ENCODE measurements at regions of chr6 and their contacts with region 1.

Region 1: GRCh38 chr6:108157234-108157980 is 8.4 kb upstream of the NR2E1 start:
- DNase-seq: peak; percentile 23
- ATAC-seq: no peak
- H3K4me3 Mint-ChIP-seq: peak overlapping the region; percentile 65
- H3K27ac Mint-ChIP-seq: no peak overlapping the region
- H3K4me1 Mint-ChIP-seq: peaks cover 15% of the 10 kb centered on the region
- H3K27me3 Mint-ChIP-seq: peaks cover 77% of the 10 kb centered on the region
- CTCF ChIP-seq: no peak

Region 2: DNA sequence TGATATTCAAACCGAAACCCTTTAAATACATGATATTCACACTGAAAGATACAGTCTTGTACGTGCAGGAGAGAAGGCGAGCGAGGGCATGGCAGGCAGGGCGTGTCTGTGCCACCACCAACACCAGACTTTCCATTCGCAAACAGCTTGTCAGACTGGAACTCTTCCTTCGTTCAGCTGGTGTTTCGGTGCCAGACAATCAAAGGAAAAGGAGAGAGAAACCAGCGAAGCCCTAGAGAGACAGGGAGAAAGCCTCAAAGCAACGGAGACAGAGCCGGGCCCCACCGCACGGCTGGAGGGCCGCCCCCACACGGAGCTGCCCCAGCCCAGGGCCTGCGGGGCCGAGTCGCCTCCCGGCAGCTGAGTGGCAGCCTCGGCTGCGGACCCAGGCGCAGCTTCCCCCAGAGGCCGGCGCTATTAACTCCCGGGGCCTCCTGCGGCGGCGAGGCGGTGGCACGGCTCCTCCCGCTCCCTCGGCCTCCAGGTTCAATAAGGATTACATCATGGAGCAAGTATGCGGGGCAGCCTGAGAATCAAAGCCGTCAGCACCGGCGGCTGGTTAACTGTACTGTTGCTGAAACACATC is 23.7 kb before region 1 on chr6:
- CTCF ChIA-PET with region 1: no interaction called
- POLR2A ChIA-PET with region 1: no interaction called
- intact Hi-C with region 1: loop called (anchors 1 kb)
- DNase-seq: peak; percentile 42
- ATAC-seq: peak; percentile 71
- H3K4me3 Mint-ChIP-seq: peak overlapping the region; percentile 87
- H3K27ac Mint-ChIP-seq: peak overlapping the region; percentile 41
- H3K4me1 Mint-ChIP-seq: peaks cover 16% of the 10 kb centered on the region
- H3K27me3 Mint-ChIP-seq: peaks cover 61% of the 10 kb centered on the region
- CTCF ChIP-seq: no peak